ENCODE measurements at regions of chr9 and their contacts with region 1.

Region 1: DNA sequence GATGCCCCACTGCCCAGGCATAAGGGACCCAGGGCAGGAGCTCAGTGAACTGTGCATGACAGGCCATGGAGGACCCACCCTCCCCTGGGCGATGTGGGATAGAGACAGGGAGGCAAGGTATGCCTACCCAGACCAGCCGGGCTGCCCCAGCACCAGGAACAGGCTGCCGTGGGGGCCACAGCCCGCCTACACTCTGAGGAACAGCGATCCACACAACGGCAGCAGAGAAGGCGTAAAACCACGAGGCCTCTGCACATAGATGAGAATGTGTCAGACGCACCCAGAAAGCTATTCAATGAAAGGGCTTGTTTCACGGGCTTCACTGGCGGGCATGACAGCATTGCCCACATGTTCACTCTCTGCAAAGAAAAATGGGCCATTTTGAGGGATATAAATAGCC is 49.5 kb downstream of the SEMA4D start:
- DNase-seq: peak; percentile 66
- H3K4me3 Mint-ChIP-seq: no peak overlapping the region
- H3K27ac Mint-ChIP-seq: peak overlapping the region; percentile 85
- H3K4me1 Mint-ChIP-seq: peaks cover 92% of the 10 kb centered on the region
- H3K27me3 Mint-ChIP-seq: no peaks in the 10 kb centered on the region

Region 2: DNA sequence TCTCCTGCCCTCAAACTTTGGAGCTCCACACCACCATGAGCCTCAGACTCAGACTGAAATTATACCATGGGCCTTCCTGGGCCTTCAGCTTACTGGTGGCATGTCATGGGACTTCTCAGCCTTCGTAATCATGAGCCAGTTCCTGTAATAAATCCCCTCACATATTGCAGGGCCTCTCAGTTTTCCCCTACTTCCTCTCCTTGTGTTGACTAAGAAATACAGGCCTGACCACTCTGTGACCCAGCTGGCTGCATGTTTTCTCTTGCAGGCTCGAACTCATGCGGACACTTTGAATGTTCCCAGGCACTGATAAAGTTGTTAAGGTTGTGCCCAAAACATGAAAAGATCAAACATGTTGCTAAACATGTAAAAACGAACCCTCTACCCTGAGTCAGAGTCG is 243.6 kb before region 1 on chr9:
- CTCF ChIA-PET with region 1: no interaction called
- intact Hi-C with region 1: no loop called
- DNase-seq: no peak
- H3K4me3 Mint-ChIP-seq: no peak overlapping the region
- H3K27ac Mint-ChIP-seq: no peak overlapping the region
- H3K4me1 Mint-ChIP-seq: no peaks in the 10 kb centered on the region
- H3K27me3 Mint-ChIP-seq: no peaks in the 10 kb centered on the region

Region 3: GRCh38 chr9:89428901-89429890 is 19.2 kb before region 1 on chr9:
- CTCF ChIA-PET with region 1: interaction called, 18 read pairs
- intact Hi-C with region 1: no loop called
- DNase-seq: peak; percentile 79
- H3K4me3 Mint-ChIP-seq: no peak overlapping the region
- H3K27ac Mint-ChIP-seq: peak overlapping the region; percentile 98
- H3K4me1 Mint-ChIP-seq: peaks cover 90% of the 10 kb centered on the region
- H3K27me3 Mint-ChIP-seq: no peaks in the 10 kb centered on the region

Region 4: DNA sequence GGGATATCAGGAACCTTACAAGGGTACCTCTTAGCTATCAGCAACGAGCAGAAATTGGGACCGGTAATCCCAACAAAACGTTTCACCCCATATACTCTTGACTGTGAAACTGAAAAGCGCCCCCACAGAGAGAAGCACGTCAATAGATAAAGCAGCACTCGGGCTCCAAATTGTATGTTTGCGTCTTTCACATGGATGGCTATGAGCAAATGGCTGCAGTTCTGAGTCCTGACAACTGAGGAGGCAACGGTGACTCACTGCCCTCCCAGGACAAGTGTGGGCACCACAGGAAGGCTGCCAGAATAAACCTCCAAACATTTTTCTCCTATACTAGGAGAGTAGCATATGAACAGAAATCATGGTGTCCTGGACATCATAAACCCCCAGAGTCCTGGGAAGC is 12.9 kb after region 1 on chr9:
- CTCF ChIA-PET with region 1: interaction called, 7 read pairs
- intact Hi-C with region 1: loop called (anchors 1 kb)
- DNase-seq: peak; percentile 71
- H3K4me3 Mint-ChIP-seq: no peak overlapping the region
- H3K27ac Mint-ChIP-seq: peak overlapping the region; percentile 50
- H3K4me1 Mint-ChIP-seq: peaks cover 96% of the 10 kb centered on the region
- H3K27me3 Mint-ChIP-seq: no peaks in the 10 kb centered on the region